ENCODE measurements at regions of chr11 and their contacts with region 1.

Region 1: GRCh38 chr11:128884703-128885338 is 6.3 kb upstream of the KCNJ5 start:
- DNase-seq: peak; percentile 80
- H3K4me3 ChIP-seq: no peak overlapping the region
- H3K27ac ChIP-seq: no peak overlapping the region
- H3K4me1 ChIP-seq: no peaks in the 10 kb centered on the region
- H3K27me3 ChIP-seq: peaks cover 43 to 62% of the 10 kb centered on the region in 2 experiments
- CTCF ChIP-seq: peak; percentile 59 to 63
- POLR2A ChIP-seq: no peak

Region 2: DNA sequence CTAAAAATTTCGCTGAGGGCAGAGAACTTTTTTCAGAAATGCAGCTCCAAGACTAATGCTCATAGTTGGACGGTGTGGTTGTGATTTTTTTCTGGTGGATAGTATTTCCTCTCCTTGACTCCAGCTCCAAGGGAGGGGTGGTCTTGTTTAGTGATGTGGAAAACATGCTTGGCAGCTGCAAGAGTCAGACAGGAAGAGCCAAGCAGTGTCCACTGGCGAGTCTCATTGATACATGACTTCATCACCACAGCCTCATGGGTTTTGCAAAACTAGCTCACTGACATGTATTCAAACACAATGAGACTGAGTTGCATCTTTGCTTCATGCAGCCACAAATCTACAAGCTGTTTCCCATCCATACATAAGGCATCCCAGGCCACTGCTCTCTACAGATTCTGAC is 10.4 kb before region 1 on chr11:
- CTCF ChIA-PET with region 1: interaction called, 14 read pairs
- POLR2A ChIA-PET with region 1: no interaction called
- dilution Hi-C with region 1: no loop called
- intact Hi-C with region 1: no loop called
- DNase-seq: no peak
- H3K4me3 ChIP-seq: no peak overlapping the region
- H3K27ac ChIP-seq: no peak overlapping the region
- H3K4me1 ChIP-seq: no peaks in the 10 kb centered on the region
- H3K27me3 ChIP-seq: peaks cover 31 to 38% of the 10 kb centered on the region in 2 experiments
- CTCF ChIP-seq: no peak
- POLR2A ChIP-seq: no peak

Region 3: DNA sequence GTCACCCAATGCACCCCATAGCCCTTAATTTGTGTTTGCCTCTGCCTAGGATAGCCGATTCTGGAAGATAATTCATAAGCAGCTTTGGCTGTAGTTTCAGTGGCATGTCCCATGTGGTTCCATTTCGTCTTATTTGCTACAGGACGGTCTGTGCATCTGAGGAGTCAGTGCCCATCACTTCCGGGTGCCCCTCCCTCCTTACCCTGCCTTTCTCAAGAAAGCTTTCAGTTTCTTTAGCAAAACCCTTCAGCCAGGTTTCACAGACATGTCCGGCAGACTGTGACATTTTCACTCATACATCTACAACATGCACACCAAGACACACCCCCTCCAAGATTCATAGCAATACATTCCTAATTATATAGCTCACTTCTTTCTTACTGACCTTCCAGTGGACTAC is 43.6 kb after region 1 on chr11:
- CTCF ChIA-PET with region 1: interaction called, 15 read pairs
- POLR2A ChIA-PET with region 1: interaction called, 5 read pairs
- dilution Hi-C with region 1: no loop called
- intact Hi-C with region 1: no loop called
- DNase-seq: no peak
- H3K4me3 ChIP-seq: no peak overlapping the region
- H3K27ac ChIP-seq: no peak overlapping the region
- H3K4me1 ChIP-seq: no peaks in the 10 kb centered on the region
- H3K27me3 ChIP-seq: peaks cover 2% of the 10 kb centered on the region in 2 experiments
- CTCF ChIP-seq: no peak
- POLR2A ChIP-seq: no peak

Region 4: GRCh38 chr11:129117595-129118350 is 233.0 kb after region 1 on chr11:
- CTCF ChIA-PET with region 1: interaction called, 4 read pairs
- POLR2A ChIA-PET with region 1: no interaction called
- dilution Hi-C with region 1: no loop called
- intact Hi-C with region 1: loop called (anchors 2 kb)
- DNase-seq: peak; percentile 77
- H3K4me3 ChIP-seq: no peak overlapping the region
- H3K27ac ChIP-seq: no peak overlapping the region
- H3K4me1 ChIP-seq: no peaks in the 10 kb centered on the region
- H3K27me3 ChIP-seq: no peaks in the 10 kb centered on the region
- CTCF ChIP-seq: peak; percentile 65 to 83
- POLR2A ChIP-seq: no peak

Region 5: GRCh38 chr11:129750349-129751292 is 865.8 kb after region 1 on chr11:
- CTCF ChIA-PET with region 1: interaction called, 7 read pairs
- POLR2A ChIA-PET with region 1: no interaction called
- dilution Hi-C with region 1: no loop called
- intact Hi-C with region 1: loop called (anchors 2 kb)
- DNase-seq: peak; percentile 72
- H3K4me3 ChIP-seq: no peak overlapping the region
- H3K27ac ChIP-seq: no peak overlapping the region
- H3K4me1 ChIP-seq: no peaks in the 10 kb centered on the region
- H3K27me3 ChIP-seq: peaks cover 0 to 4% of the 10 kb centered on the region in 2 experiments
- CTCF ChIP-seq: peak; percentile 96 to 98
- POLR2A ChIP-seq: no peak